B cell (primary cell): ENCODE measurements at regions of chr5 and their contacts with region 1.

Region 1: GRCh38 chr5:159073026-159073425 is 26.7 kb downstream of the EBF1 start:
- DNase-seq: no peak
- ATAC-seq: no peak
- H3K4me3 ChIP-seq: no peak overlapping the region
- H3K4me3 Mint-ChIP-seq: no peak overlapping the region
- H3K27ac ChIP-seq: no peak overlapping the region
- H3K27ac Mint-ChIP-seq: peak overlapping the region; percentile 44
- H3K4me1 ChIP-seq: no peaks in the 10 kb centered on the region
- H3K4me1 Mint-ChIP-seq: peaks cover 47% of the 10 kb centered on the region
- H3K27me3 ChIP-seq: no peaks in the 10 kb centered on the region
- H3K27me3 Mint-ChIP-seq: no peaks in the 10 kb centered on the region
- CTCF ChIP-seq: no peak

Region 2: DNA sequence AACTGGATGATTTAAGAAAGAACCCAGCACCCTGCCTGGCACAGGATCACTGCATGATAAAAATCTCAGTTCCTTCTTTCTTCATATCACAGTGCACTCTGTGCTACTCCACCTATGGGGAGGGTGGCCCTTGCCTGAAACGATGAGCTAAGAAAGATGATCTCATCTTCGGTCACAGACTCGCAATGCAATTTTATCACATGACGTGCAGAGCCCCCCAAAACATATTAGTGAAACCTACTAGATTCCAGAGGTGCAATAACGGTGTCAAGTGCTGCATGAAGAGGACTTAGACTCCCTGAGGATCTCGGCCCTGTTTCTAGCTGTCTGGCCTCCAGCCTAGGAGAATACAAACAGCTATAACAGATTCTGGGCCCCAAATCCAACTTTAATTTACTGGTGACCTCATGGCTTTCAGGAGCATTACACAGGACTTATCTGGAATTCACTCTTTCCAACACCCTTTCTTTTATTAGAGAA is 77.3 kb before region 1 on chr5:
- CTCF ChIA-PET with region 1: no interaction called
- POLR2A ChIA-PET with region 1: no interaction called
- intact Hi-C with region 1: no loop called
- DNase-seq: peak; percentile 55
- ATAC-seq: peak; percentile 78
- H3K4me3 ChIP-seq: no peak overlapping the region
- H3K4me3 Mint-ChIP-seq: peak overlapping the region; percentile 4
- H3K27ac ChIP-seq: peak overlapping the region; percentile 31 to 59
- H3K27ac Mint-ChIP-seq: peak overlapping the region; percentile 60
- H3K4me1 ChIP-seq: peaks cover 20 to 25% of the 10 kb centered on the region in 2 donors
- H3K4me1 Mint-ChIP-seq: peaks cover 57% of the 10 kb centered on the region
- H3K27me3 ChIP-seq: no peaks in the 10 kb centered on the region
- H3K27me3 Mint-ChIP-seq: no peaks in the 10 kb centered on the region
- CTCF ChIP-seq: no peak

Region 3: GRCh38 chr5:159061179-159061796 is 11.7 kb before region 1 on chr5:
- CTCF ChIA-PET with region 1: interaction called, 4 read pairs
- POLR2A ChIA-PET with region 1: interaction called, 13 read pairs
- intact Hi-C with region 1: no loop called
- DNase-seq: no peak
- ATAC-seq: no peak
- H3K4me3 ChIP-seq: no peak overlapping the region
- H3K4me3 Mint-ChIP-seq: no peak overlapping the region
- H3K27ac ChIP-seq: no peak overlapping the region
- H3K27ac Mint-ChIP-seq: no peak overlapping the region
- H3K4me1 ChIP-seq: peaks cover 11 to 23% of the 10 kb centered on the region in 2 donors
- H3K4me1 Mint-ChIP-seq: peaks cover 74% of the 10 kb centered on the region
- H3K27me3 ChIP-seq: no peaks in the 10 kb centered on the region
- H3K27me3 Mint-ChIP-seq: no peaks in the 10 kb centered on the region
- CTCF ChIP-seq: no peak